CD8-positive, alpha-beta T cell (primary cell): ENCODE measurements at regions of chr12 and their contacts with region 1.

Region 1: GRCh38 chr12:68610370-68611093 is at the start of gene RAP1B:
- DNase-seq: peak; percentile 80 to 96 (median 88)
- ATAC-seq: peak; percentile 81
- H3K4me3 ChIP-seq: peak within 1 kb of the TSS; percentile 95 to 97
- H3K4me3 Mint-ChIP-seq: peak within 1 kb of the TSS; percentile 93
- H3K27ac ChIP-seq: peak within 1 kb of the TSS; percentile 93 to 96
- H3K27ac Mint-ChIP-seq: peak within 1 kb of the TSS; percentile 99
- H3K4me1 ChIP-seq: peaks cover 26% of the 10 kb centered on the region
- H3K4me1 Mint-ChIP-seq: peaks cover 38% of the 10 kb centered on the region
- H3K27me3 ChIP-seq: no peaks in the 10 kb centered on the region
- H3K27me3 Mint-ChIP-seq: no peaks in the 10 kb centered on the region
- CTCF ChIP-seq: no peak
- total RNA-seq, gene RAP1B: 299 TPM

Region 2: DNA sequence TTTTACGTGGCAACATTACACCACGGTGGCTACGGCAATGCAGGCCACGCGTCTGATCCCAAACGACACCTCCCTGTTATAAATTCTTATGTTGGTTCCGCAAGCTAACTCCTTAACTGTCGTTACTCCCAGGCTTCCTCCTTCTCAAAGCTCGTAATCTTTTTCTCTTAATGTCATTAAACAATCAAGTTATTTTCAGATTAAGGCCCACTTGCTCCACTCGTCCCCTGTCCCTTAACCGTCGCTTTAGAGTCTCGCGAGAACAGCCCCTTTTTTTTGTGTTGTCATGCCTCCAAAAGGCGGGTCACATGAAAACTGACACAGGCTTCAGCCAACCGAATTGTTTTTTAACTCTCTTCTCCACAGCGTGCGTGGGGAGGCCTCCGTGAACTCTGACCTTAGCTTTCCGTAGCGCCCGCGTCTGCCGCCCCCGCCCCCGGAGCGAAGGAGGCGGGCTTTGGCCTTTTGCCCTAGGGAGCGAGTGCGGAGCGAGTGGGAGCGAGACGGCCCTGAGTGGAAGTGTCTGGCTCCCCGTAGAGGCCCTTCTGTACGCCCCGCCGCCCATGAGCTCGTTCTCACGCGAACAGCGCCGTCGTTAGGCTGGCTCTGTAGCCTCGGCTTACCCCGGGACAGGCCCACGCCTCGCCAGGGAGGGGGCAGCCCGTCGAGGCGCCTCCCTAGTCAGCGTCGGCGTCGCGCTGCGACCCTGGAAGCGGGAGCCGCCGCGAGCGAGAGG is 1341.5 kb before region 1 on chr12 and contains the start of gene CAND1:
- CTCF ChIA-PET with region 1: no interaction called
- POLR2A ChIA-PET with region 1: no interaction called
- intact Hi-C with region 1: loop called in 1 of 2 experiments (anchors 5 kb)
- DNase-seq: peak; percentile 89 to 99 (median 95)
- ATAC-seq: peak; percentile 78
- H3K4me3 ChIP-seq: peak within 1 kb of the TSS; percentile 88 to 92
- H3K4me3 Mint-ChIP-seq: peak within 1 kb of the TSS; percentile 88
- H3K27ac ChIP-seq: peak within 1 kb of the TSS; percentile 68 to 97
- H3K27ac Mint-ChIP-seq: peak within 1 kb of the TSS; percentile 99
- H3K4me1 ChIP-seq: peaks cover 33% of the 10 kb centered on the region
- H3K4me1 Mint-ChIP-seq: peaks cover 48% of the 10 kb centered on the region
- H3K27me3 ChIP-seq: no peaks in the 10 kb centered on the region
- H3K27me3 Mint-ChIP-seq: no peaks in the 10 kb centered on the region
- CTCF ChIP-seq: no peak
- total RNA-seq, gene CAND1: 116 to 130 TPM

Region 3: DNA sequence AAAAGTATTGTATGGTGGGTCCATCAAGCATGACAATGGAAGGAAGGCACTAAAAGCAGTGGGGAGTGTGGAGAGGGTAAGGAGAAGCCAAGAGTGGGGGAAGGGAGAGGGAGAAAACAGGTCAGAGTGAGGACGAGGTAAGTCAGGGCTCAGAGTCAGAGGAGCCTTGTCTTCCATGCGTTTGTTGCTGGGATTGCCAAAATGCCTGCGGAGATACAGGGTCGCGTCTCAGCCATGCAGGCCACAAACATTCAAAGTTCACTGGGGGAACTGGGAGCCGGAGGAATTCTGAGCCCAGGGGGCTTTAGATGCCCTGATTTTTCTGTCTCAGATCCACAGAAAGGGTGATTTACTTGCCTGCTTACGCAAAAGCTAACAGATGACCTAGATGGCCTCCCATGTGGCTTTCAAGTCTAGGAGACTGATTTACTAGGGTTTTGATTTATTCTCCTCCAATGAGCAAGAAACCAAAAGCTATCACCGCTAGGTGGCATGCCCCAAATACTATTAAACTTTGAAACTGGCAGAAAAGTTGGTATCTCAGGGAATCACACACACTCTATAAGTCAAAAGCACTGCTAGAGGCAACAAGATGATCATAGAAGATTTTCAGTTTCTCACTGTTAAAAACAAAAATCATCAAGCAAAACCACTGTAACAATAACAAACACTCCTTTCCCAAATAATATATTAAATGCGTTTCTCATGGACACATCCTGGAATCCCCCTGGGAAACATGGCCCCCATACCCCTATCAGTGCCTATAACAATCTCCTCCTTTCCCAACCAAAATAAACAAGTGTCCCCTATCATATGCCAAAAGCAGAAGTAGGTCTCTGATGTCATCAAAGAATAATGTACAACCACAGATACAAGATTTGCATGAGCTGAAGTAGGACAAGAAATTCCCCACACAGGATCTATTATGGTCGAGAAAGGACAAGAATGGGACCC is 251.7 kb before region 1 on chr12:
- CTCF ChIA-PET with region 1: interaction called, 11 read pairs
- POLR2A ChIA-PET with region 1: interaction called, 19 read pairs
- intact Hi-C with region 1: loop called (anchors 1 to 5 kb)
- DNase-seq: peak; percentile 46 to 85 (median 68)
- ATAC-seq: peak; percentile 93
- H3K4me3 ChIP-seq: no peak overlapping the region
- H3K4me3 Mint-ChIP-seq: no peak overlapping the region
- H3K27ac ChIP-seq: no peak overlapping the region
- H3K27ac Mint-ChIP-seq: peak overlapping the region; percentile 29
- H3K4me1 ChIP-seq: peaks cover 14% of the 10 kb centered on the region
- H3K4me1 Mint-ChIP-seq: peaks cover 31% of the 10 kb centered on the region
- H3K27me3 ChIP-seq: no peaks in the 10 kb centered on the region
- H3K27me3 Mint-ChIP-seq: no peaks in the 10 kb centered on the region
- CTCF ChIP-seq: peak; percentile 64

Region 4: GRCh38 chr12:68538726-68539614 is 71.6 kb before region 1 on chr12:
- CTCF ChIA-PET with region 1: interaction called, 4 read pairs
- POLR2A ChIA-PET with region 1: interaction called, 35 read pairs
- intact Hi-C with region 1: loop called (anchors 1 kb)
- DNase-seq: peak; percentile 34 to 93 (median 66)
- ATAC-seq: peak; percentile 93
- H3K4me3 ChIP-seq: peak overlapping the region in 1 of 2 experiments; percentile 1
- H3K4me3 Mint-ChIP-seq: peak overlapping the region; percentile 67
- H3K27ac ChIP-seq: peak overlapping the region; percentile 9 to 37
- H3K27ac Mint-ChIP-seq: peak overlapping the region; percentile 91
- H3K4me1 ChIP-seq: peaks cover 39% of the 10 kb centered on the region
- H3K4me1 Mint-ChIP-seq: peaks cover 57% of the 10 kb centered on the region
- H3K27me3 ChIP-seq: no peaks in the 10 kb centered on the region
- H3K27me3 Mint-ChIP-seq: no peaks in the 10 kb centered on the region
- CTCF ChIP-seq: no peak

Region 5: DNA sequence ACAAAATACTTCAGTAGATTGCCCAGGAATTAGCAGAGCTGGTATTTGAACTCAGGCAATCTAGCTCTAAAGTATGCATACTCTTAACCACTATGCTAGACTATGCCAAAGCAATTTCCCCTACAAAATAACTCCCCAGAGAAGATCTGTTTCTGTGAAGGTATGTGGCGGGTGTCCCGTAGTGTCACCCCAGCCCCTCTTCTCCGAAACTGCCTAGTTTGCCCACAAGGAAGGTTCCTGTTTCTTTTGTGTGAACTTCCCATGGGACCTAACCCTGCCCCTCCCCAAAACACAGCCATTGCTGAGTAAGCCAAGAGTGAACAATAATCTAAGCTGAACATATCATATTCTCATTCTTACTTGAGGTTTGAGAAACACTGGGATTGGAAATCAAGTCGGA is 15.3 kb before region 1 on chr12:
- CTCF ChIA-PET with region 1: interaction called, 4 read pairs
- POLR2A ChIA-PET with region 1: interaction called, 64 read pairs
- intact Hi-C with region 1: loop called (anchors 1 to 2 kb)
- DNase-seq: no peak
- ATAC-seq: no peak
- H3K4me3 ChIP-seq: no peak overlapping the region
- H3K4me3 Mint-ChIP-seq: no peak overlapping the region
- H3K27ac ChIP-seq: no peak overlapping the region
- H3K27ac Mint-ChIP-seq: peak overlapping the region; percentile 63
- H3K4me1 ChIP-seq: peaks cover 80% of the 10 kb centered on the region
- H3K4me1 Mint-ChIP-seq: peaks cover 73% of the 10 kb centered on the region
- H3K27me3 ChIP-seq: no peaks in the 10 kb centered on the region
- H3K27me3 Mint-ChIP-seq: no peaks in the 10 kb centered on the region
- CTCF ChIP-seq: no peak

Region 6: GRCh38 chr12:68648179-68648578 is 37.6 kb after region 1 on chr12:
- CTCF ChIA-PET with region 1: interaction called, 4 read pairs
- POLR2A ChIA-PET with region 1: interaction called, 3 read pairs
- intact Hi-C with region 1: loop called (anchors 5 kb)
- DNase-seq: peak in 1 of 9 experiments; percentile 32
- ATAC-seq: peak; percentile 27
- H3K4me3 ChIP-seq: no peak overlapping the region
- H3K4me3 Mint-ChIP-seq: peak overlapping the region; percentile 2
- H3K27ac ChIP-seq: peak overlapping the region in 1 of 2 experiments; percentile 58
- H3K27ac Mint-ChIP-seq: peak overlapping the region; percentile 55
- H3K4me1 ChIP-seq: peaks cover 42% of the 10 kb centered on the region
- H3K4me1 Mint-ChIP-seq: peaks cover 67% of the 10 kb centered on the region
- H3K27me3 ChIP-seq: no peaks in the 10 kb centered on the region
- H3K27me3 Mint-ChIP-seq: no peaks in the 10 kb centered on the region
- CTCF ChIP-seq: no peak

Region 7: DNA sequence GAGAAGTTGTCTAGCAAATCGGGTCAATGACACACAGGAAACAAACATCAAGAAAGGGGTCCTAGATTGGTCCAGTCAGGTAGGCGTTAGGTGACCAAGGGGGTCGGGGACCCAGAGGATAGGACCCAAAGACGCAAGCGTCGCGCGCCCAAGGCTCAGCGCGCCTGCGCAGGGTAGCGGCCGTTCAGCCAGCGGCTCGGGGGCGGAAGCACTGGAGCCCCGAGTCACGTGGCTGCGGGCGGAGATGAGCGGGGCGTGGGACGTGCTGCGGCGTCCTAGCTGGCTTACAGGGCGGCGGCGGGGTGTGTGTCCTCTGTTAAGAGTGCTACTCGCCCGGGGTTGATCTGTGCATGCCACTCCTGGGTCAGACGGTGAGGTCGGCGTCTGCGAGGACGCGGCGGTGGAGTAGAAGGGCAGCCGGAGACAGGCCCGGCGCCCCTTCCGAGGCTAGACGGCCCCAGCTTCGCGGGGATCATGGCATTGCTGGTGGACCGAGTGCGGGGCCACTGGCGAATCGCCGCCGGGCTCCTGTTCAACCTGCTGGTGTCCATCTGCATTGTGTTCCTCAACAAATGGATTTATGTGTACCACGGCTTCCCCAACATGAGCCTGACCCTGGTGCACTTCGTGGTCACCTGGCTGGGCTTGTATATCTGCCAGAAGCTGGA is 135.5 kb after region 1 on chr12 and contains the start of gene SLC35E3:
- CTCF ChIA-PET with region 1: no interaction called
- POLR2A ChIA-PET with region 1: interaction called, 4 read pairs
- intact Hi-C with region 1: loop called in 1 of 2 experiments (anchors 5 kb)
- DNase-seq: peak; percentile 83 to 95 (median 90)
- ATAC-seq: peak; percentile 96
- H3K4me3 ChIP-seq: peak within 1 kb of the TSS; percentile 80 to 96
- H3K4me3 Mint-ChIP-seq: peak within 1 kb of the TSS; percentile 98
- H3K27ac ChIP-seq: peak within 1 kb of the TSS; percentile 73 to 76
- H3K27ac Mint-ChIP-seq: peak within 1 kb of the TSS; percentile 97
- H3K4me1 ChIP-seq: peaks cover 21% of the 10 kb centered on the region
- H3K4me1 Mint-ChIP-seq: peaks cover 48% of the 10 kb centered on the region
- H3K27me3 ChIP-seq: no peaks in the 10 kb centered on the region
- H3K27me3 Mint-ChIP-seq: no peaks in the 10 kb centered on the region
- CTCF ChIP-seq: no peak
- total RNA-seq, gene SLC35E3: 4.0 to 5.7 TPM

Region 8: DNA sequence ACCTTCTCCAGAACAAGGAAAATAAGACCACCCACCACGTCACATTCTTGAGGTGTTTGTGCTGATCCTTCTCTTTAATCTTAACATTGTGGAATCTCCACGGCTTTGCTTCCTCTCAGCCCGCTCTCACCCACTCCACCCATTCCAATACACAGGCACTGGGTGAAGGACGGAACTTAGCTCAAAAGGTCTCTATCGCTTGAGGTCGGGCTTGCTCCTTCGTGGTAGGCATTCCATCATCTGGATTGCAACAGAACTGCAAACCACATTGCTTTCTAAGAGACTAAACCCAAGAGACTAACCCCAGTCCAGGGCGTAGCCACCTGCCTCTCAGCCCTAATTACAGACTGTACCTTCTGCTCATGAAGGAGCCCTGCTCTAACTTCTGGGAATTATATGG is 173.5 kb after region 1 on chr12:
- CTCF ChIA-PET with region 1: no interaction called
- POLR2A ChIA-PET with region 1: no interaction called
- intact Hi-C with region 1: no loop called
- DNase-seq: peak in 1 of 9 experiments; percentile 14
- ATAC-seq: no peak
- H3K4me3 ChIP-seq: no peak overlapping the region
- H3K4me3 Mint-ChIP-seq: no peak overlapping the region
- H3K27ac ChIP-seq: no peak overlapping the region
- H3K27ac Mint-ChIP-seq: no peak overlapping the region
- H3K4me1 ChIP-seq: no peaks in the 10 kb centered on the region
- H3K4me1 Mint-ChIP-seq: no peaks in the 10 kb centered on the region
- H3K27me3 ChIP-seq: no peaks in the 10 kb centered on the region
- H3K27me3 Mint-ChIP-seq: no peaks in the 10 kb centered on the region
- CTCF ChIP-seq: no peak

Region 9: DNA sequence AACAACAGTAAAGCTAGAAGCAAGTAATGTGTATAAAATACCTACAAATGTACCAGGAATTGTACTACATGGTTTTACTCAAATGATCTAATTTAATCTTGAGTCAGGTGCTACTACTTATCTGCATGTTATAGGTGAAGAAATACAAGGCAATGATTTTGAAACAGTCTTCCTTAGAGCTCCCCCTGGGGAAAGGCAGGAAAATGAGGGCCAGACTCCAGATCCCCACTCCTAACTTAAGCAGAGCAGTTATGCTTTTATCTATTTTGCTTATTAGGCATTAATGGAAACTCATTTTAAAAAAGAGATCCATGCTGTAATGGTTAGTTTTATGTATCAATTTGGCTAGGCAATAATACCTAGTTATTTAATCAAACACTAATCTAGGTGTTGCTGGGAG is 519.5 kb after region 1 on chr12:
- CTCF ChIA-PET with region 1: no interaction called
- POLR2A ChIA-PET with region 1: no interaction called
- intact Hi-C with region 1: no loop called
- DNase-seq: no peak
- ATAC-seq: no peak
- H3K4me3 ChIP-seq: no peak overlapping the region
- H3K4me3 Mint-ChIP-seq: no peak overlapping the region
- H3K27ac ChIP-seq: no peak overlapping the region
- H3K27ac Mint-ChIP-seq: no peak overlapping the region
- H3K4me1 ChIP-seq: no peaks in the 10 kb centered on the region
- H3K4me1 Mint-ChIP-seq: no peaks in the 10 kb centered on the region
- H3K27me3 ChIP-seq: no peaks in the 10 kb centered on the region
- H3K27me3 Mint-ChIP-seq: peaks cover 2% of the 10 kb centered on the region
- CTCF ChIP-seq: no peak

Region 10: DNA sequence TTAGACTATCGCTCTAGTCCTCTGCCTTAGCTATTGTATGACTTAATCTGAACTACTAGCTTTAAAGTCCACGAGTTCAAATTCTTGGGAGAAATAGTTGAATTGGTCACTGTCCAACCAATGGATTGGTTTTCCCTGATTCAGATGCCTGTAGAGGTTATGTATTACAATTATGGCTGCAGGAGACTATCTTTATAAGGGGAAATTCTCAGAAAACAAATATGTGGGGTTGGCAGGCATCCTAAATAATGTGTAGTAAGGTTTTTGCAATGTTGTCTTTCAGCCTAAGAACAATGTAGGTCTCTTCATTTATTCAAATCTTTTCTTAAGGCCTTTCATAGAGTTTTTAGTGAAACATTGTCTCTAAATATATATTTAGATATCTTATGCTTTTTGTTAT is 1241.4 kb after region 1 on chr12:
- CTCF ChIA-PET with region 1: no interaction called
- POLR2A ChIA-PET with region 1: no interaction called
- intact Hi-C with region 1: no loop called
- DNase-seq: no peak
- ATAC-seq: no peak
- H3K4me3 ChIP-seq: no peak overlapping the region
- H3K4me3 Mint-ChIP-seq: no peak overlapping the region
- H3K27ac ChIP-seq: no peak overlapping the region
- H3K27ac Mint-ChIP-seq: no peak overlapping the region
- H3K4me1 ChIP-seq: no peaks in the 10 kb centered on the region
- H3K4me1 Mint-ChIP-seq: no peaks in the 10 kb centered on the region
- H3K27me3 ChIP-seq: no peaks in the 10 kb centered on the region
- H3K27me3 Mint-ChIP-seq: no peaks in the 10 kb centered on the region
- CTCF ChIP-seq: no peak